HEK293T (cell line): ENCODE measurements at regions of chr12 and their contacts with region 1.

Region 1: GRCh38 chr12:49219417-49220026 is 30.6 kb upstream of the TUBA1A start:
- DNase-seq: no peak

Region 2: GRCh38 chr12:49188914-49189367 is 30.6 kb before region 1 on chr12 and contains the start of gene TUBA1A:
- CTCF ChIA-PET with region 1: no interaction called
- POLR2A ChIA-PET with region 1: interaction called, 10 read pairs
- DNase-seq: peak; percentile 93

Region 3: DNA sequence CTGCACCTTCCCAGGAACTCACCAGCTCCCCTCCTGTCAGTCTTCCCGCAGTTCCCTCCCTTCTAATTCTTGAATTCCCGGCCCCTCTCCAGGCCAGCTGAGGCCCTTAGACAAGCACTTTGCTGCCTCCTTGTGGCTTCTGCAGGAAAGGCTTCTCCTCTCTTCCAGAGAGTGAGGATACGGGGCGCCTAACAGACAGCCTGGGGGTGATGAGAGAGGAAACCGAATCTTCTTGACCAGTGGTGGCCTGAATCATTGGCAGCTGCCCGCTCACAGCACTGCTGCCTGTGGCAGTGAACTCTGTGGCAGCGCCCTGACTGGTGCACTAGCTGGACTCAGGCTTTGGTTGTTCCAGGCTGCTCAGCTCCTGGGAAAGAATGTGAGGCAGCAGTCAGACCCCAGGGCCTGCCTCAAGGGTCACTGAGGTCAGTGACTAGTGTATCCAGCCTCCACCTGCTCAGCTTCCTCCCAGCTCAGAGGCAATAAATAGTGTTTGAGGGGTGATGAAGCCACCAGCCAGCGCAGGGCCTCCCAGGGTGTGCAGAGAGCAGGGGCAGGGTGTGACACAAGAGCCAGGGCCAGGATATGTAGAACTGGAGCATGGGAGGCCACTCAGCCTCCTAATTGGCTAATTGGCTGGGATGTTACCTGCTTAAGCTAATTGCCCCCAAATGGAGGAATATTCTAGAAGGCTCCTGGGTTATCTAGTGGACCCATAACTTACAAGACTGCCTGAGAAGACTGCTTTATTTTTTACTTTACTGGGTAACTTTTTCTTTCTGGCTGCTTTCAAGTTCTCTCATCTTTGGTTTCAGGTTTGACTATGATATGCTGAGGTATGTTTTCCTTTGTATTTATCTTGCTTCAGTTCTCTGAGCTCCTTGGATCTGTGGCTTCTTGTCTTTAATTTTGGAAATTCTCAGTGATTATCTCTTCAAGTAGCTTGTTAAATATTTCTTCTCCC is 361.3 kb after region 1 on chr12:
- CTCF ChIA-PET with region 1: no interaction called
- POLR2A ChIA-PET with region 1: no interaction called
- DNase-seq: peak; percentile 84